Cardiac septum (tissue), 1 donor: ENCODE measurements at regions of chr3 and their contacts with region 1.

Region 1: GRCh38 chr3:159804726-159805410 is 183.8 kb upstream of the IL12A start:
- DNase-seq: no peak

Region 2: GRCh38 chr3:159322322-159322939 is 482.4 kb before region 1 on chr3:
- intact Hi-C with region 1: loop called (anchors 10 kb)
- DNase-seq: no peak

Region 3: DNA sequence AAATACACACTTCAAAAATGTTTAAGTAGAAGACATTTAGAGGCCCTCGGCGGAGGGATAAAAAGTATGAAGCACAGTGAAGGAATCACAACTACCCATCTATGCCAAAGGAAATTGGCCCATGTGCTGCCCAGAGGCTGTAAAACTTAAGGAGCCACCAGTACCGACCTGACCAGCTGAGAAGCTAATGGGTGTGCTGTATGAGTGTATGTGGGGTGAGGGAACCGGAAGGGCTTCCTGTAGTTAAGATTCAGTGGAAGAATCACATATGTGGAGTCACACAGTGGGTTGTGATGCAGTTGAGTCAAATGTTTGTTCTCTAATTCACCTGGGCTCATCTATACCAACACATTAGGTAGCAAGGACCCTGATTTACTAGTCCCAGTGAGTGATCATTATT is 332.3 kb before region 1 on chr3:
- intact Hi-C with region 1: no loop called
- DNase-seq: no peak

Region 4: DNA sequence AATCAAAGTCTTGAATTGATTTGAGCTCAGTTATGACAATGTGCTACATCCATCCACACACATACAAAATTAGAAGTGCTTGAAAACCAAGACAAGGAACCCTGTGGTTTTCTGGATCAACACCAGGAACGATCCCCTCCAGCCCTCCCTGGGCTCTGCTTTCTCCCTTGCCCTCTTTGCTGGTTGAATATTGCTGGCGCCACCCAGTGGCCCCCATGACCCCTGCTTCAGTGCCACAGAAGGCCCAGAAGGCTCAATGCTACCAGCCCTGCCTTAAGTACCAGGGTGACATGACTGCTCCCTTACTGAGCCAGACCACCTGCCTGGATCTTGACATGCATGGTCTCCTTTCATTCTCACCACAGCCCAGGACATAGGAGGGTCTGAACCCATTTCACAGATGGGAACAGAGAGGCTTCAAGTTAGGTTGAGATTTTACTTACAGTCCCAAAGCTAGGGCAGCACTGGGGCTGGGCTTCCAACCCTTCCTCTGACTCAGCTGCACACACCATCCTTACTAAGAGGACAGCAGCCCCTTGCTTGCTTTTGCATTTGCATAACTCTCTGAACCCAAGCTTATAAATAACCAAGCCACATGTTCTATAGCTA is 198.8 kb after region 1 on chr3:
- intact Hi-C with region 1: loop called (anchors 5 kb)
- DNase-seq: no peak